ENCODE measurements at regions of chr7 and their contacts with region 1.

Region 1: GRCh38 chr7:48088559-48089045 is 463 bp upstream of the UPP1 start:
- H3K4me3 ChIP-seq: peak overlapping the region; percentile 76
- H3K27ac ChIP-seq: peak overlapping the region; percentile 97
- H3K4me1 ChIP-seq: peaks cover 10% of the 10 kb centered on the region
- CTCF ChIP-seq: no peak

Region 2: DNA sequence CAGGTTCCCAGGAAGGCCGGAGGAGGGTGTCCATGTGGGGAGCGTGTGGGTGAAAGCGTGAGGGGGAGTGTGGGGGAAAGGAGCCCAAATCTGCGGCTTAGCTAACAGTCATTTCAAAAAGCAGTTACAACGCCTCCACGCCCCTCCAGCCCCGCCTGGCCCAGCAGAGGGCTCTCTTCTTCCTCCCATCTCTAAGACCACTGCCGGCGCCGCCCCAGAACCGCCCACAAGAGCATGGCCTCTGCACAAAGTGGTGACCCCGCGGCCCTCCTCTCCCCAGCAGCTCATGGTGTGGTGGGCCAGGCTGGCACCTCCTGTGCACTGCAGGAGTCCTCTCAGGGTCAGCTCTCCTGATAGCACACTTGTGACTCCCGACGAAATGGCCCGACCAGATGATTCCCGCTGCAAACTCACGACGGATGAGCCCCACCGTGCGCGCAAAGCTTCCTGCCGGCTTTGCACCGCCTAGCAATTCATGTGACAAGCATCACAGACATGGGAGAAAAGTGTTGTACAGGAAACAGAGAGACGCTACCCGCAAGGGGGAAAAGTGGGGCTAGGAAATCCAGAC is 96.8 kb before region 1 on chr7:
- CTCF ChIA-PET with region 1: interaction called, 6 read pairs
- POLR2A ChIA-PET with region 1: interaction called, 11 read pairs
- H3K4me3 ChIP-seq: peak overlapping the region; percentile 18
- H3K27ac ChIP-seq: no peak overlapping the region
- H3K4me1 ChIP-seq: no peaks in the 10 kb centered on the region
- CTCF ChIP-seq: peak; percentile 59

Region 3: DNA sequence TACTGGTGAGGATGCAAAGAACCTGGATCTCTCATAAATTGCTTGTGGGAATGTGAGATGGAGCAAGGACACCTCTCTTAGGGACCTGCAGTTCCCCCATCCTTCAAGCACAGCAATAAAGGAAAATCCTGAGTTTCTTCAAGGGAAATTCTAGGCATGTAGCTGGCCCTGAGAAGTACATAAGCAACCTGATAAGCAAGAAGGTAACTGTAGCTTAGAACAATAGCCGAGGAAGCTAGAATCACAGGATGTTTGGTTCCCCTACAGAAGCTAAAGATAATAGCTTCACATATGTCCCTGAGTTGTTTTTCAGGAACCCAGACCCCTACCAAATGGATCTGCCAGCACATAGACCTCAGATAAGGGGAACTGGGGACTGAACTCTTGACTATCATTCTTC is 11.2 kb before region 1 on chr7:
- CTCF ChIA-PET with region 1: interaction called, 3 read pairs
- POLR2A ChIA-PET with region 1: interaction called, 12 read pairs
- H3K4me3 ChIP-seq: no peak overlapping the region
- H3K27ac ChIP-seq: no peak overlapping the region
- H3K4me1 ChIP-seq: no peaks in the 10 kb centered on the region
- CTCF ChIP-seq: no peak

Region 4: DNA sequence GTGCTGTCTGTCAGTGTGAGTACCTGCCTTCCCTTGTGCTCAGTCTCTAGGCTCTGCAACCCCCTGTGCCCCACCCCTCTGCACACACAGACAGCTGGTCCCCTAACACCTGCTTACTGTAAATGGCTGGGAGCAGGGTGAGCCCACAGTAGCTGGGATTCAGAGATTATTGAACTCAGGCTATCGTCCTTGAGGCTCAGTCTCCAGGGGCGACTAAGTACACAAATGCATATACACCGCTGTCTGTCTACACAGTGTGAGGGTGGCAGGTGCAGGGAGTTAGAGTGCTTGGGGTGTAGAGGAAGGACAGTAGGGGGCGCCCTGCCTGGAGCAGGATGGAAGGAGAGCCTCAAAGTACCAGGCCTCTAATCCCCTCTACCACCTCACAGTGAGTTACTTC is 13.4 kb after region 1 on chr7:
- CTCF ChIA-PET with region 1: interaction called, 10 read pairs
- POLR2A ChIA-PET with region 1: interaction called, 11 read pairs
- H3K4me3 ChIP-seq: no peak overlapping the region
- H3K27ac ChIP-seq: no peak overlapping the region
- H3K4me1 ChIP-seq: no peaks in the 10 kb centered on the region
- CTCF ChIP-seq: no peak

Measured in HEK293 (cell line).